AG04450 (cell line): ENCODE measurements at regions of chrX and their contacts with region 1.

Region 1: DNA sequence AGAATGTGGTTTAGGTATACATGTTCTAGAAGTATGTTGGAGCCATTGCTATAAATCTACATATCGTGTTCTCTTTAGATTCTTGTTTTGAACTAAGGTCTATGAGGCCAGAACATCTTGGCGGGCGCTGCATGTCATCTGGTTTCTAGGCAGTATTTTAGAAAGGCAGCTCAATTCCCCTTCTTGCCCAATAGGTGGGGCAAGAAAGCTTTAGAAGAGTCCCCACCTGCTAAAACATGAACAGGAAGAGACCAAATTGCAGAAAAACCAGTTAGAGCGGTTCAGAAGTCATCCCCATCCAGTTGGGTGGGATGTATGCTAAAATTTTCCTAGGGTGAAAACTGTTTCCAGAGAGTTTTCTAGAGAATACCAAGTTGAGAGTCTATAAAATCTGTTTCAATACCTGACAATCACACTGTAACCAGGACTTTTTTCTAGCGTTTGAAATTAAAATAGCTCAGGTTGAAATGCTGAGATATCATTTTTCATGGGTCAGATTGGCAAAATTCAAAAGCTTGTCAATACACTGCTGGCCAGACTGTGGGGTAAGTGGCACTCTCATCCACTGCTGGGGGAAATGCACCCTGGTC is 17.5 kb upstream of the SH3KBP1 start:
- DNase-seq: no peak
- H3K4me3 ChIP-seq: no peak overlapping the region
- H3K27ac ChIP-seq: no peak overlapping the region
- H3K27me3 ChIP-seq: no peaks in the 10 kb centered on the region
- CTCF ChIP-seq: peak; percentile 69

Region 2: GRCh38 chrX:19739683-19740082 is 165.2 kb before region 1 on chrX:
- CTCF ChIA-PET with region 1: interaction called, 14 read pairs
- POLR2A ChIA-PET with region 1: no interaction called
- DNase-seq: peak; percentile 10
- H3K4me3 ChIP-seq: no peak overlapping the region
- H3K27ac ChIP-seq: no peak overlapping the region
- H3K27me3 ChIP-seq: no peaks in the 10 kb centered on the region
- CTCF ChIP-seq: peak; percentile 65

Region 3: DNA sequence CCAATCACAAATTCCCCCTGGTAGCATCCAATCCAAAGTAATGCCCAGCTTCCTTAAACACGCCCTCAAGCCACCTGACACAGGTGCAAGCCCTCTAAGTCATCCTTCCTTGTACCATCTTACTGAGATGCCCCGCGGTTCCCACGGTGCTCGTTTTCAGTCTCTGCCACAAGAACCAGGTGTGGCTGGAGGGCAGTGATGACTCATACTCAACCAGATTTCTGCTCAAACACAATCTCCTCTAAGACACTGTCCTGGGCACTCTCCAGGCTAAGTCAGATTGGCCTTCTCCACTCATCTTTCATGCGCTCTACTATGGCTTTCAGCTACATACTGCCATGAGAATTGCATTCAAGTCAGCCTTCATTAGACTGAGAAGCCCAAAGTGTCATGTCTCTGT is 21.0 kb before region 1 on chrX:
- CTCF ChIA-PET with region 1: no interaction called
- POLR2A ChIA-PET with region 1: no interaction called
- DNase-seq: no peak
- H3K4me3 ChIP-seq: no peak overlapping the region
- H3K27ac ChIP-seq: no peak overlapping the region
- H3K27me3 ChIP-seq: no peaks in the 10 kb centered on the region
- CTCF ChIP-seq: no peak

Region 4: DNA sequence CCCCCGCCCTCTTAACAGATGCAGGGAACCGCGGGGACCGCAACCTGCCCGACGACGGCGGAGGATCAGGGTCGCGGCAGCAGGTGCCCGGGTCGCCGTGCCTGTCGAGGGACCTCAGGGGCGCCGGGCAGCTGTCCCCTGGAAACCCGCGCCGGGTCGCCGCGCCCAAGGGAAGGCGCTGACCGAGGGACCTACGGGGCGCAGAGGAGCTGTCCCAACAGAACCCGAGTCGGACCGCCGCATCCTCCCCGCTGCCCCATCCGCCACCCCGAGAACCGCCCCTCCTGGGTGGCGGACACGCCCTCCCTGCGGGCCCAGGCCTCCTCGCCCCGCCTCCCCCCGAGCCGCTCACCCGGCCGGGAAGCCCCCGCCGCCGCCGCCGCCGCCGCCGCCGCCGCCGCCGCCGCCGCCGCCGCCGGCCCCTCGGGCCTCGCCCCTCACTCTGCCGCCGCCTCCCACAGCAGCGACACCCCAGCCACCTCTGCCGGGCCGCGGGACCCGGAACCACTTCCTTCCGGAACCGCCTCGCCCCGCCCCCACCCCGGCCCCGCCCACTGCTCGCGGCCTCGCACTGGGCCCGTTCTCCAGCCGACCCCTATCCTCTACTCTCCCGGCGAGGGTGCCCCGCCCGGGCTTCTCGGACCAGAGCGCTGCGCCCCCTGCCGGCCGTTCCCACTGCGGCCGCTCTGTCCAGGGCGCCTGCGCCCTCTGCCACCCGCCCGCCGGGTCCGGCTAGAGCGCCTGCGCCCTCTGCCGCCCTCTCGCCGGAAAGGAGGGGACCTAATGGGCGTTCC is 85.9 kb after region 1 on chrX and contains the start of gene BCLAF3:
- CTCF ChIA-PET with region 1: interaction called, 11 read pairs
- POLR2A ChIA-PET with region 1: no interaction called
- DNase-seq: peak; percentile 55
- H3K4me3 ChIP-seq: peak within 1 kb of the TSS; percentile 68
- H3K27ac ChIP-seq: no peak within 1 kb of the TSS
- H3K27me3 ChIP-seq: no peaks in the 10 kb centered on the region
- CTCF ChIP-seq: peak; percentile 60
- polyA plus RNA-seq, gene BCLAF3: 2.5 and 2.8 TPM in 2 replicates

Region 5: GRCh38 chrX:20066968-20067708 is 162.3 kb after region 1 on chrX:
- CTCF ChIA-PET with region 1: interaction called, 43 read pairs
- POLR2A ChIA-PET with region 1: interaction called, 3 read pairs
- DNase-seq: peak; percentile 20
- H3K4me3 ChIP-seq: no peak overlapping the region
- H3K27ac ChIP-seq: peak overlapping the region; percentile 52
- H3K27me3 ChIP-seq: no peaks in the 10 kb centered on the region
- CTCF ChIP-seq: peak; percentile 56